Activated CD8-positive, alpha-beta memory T cell treated with anti-CD3 and anti-CD28 coated beads, Interleukin-2, amount 10 ng/mL, durations not matched to agents 7 days and 5 days (primary cell): ENCODE measurements at regions of chr16 and their contacts with region 1.

Region 1: DNA sequence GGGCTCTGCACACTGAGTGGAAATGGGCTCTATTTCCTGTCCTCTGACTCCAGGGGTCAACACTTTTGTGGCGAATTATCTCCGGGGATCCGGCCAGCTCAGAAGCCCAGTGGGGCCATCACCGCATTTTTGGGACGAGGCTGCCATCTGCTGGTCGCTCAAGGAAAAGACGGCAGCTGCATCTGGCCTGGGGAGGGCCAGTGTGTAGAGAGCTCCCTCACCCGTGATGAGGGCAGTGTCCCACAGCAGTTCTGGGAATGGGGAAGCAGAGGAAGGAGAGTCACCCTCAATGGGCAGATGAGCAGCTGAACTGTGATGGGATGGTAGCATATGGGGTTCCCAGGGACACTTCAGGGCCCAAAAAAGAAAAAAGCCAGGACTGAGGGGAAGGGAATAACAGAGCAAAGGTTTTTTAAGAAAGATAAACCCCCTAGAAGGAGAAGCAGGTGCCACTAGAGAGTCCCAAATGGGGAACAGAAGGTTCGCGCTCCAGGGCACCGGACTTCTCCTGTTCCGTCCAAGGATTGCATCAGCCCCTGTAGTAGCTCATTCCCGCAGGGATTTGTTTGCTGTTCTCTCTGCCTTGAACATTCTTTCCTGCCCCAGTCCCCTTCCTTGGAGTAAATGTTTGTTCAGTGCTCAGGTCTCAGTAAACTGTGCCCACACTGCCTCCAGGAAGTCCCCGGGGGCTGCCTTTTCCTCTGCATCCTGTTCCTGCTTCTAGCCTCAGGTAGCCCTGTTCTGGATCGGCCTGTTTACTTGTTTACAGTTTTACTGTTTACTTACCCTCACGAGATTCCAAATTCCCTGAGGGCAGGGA is 9.3 kb upstream of the ABCC12 start:
- DNase-seq: peak; percentile 74
- ATAC-seq: peak; percentile 88
- H3K4me3 Mint-ChIP-seq: no peak overlapping the region
- H3K27ac Mint-ChIP-seq: no peak overlapping the region
- H3K4me1 Mint-ChIP-seq: peaks cover 16% of the 10 kb centered on the region
- H3K27me3 Mint-ChIP-seq: peaks cover 19% of the 10 kb centered on the region

Region 2: GRCh38 chr16:46947900-46948547 is 1217.1 kb before region 1 on chr16:
- CTCF ChIA-PET with region 1: interaction called, 14 read pairs
- DNase-seq: peak; percentile 48
- ATAC-seq: peak; percentile 67
- H3K4me3 Mint-ChIP-seq: no peak overlapping the region
- H3K27ac Mint-ChIP-seq: no peak overlapping the region
- H3K4me1 Mint-ChIP-seq: peaks cover 21% of the 10 kb centered on the region
- H3K27me3 Mint-ChIP-seq: no peaks in the 10 kb centered on the region

Region 3: GRCh38 chr16:47916266-47916665 is 248.9 kb before region 1 on chr16:
- CTCF ChIA-PET with region 1: no interaction called
- DNase-seq: no peak
- ATAC-seq: no peak
- H3K4me3 Mint-ChIP-seq: no peak overlapping the region
- H3K27ac Mint-ChIP-seq: no peak overlapping the region
- H3K4me1 Mint-ChIP-seq: no peaks in the 10 kb centered on the region
- H3K27me3 Mint-ChIP-seq: no peaks in the 10 kb centered on the region

Region 4: GRCh38 chr16:48136547-48137360 is 28.4 kb before region 1 on chr16:
- CTCF ChIA-PET with region 1: no interaction called
- DNase-seq: no peak
- ATAC-seq: no peak
- H3K4me3 Mint-ChIP-seq: no peak overlapping the region
- H3K27ac Mint-ChIP-seq: no peak overlapping the region
- H3K4me1 Mint-ChIP-seq: no peaks in the 10 kb centered on the region
- H3K27me3 Mint-ChIP-seq: peaks cover 2% of the 10 kb centered on the region